ENCODE measurements at regions of chr4 and their contacts with region 1.

Region 1: GRCh38 chr4:164012396-164013027 is 518.0 kb downstream of the TMA16 start:
- DNase-seq: peak; percentile 23 to 56
- H3K4me3 ChIP-seq: no peak overlapping the region
- H3K27ac ChIP-seq: no peak overlapping the region
- H3K4me1 ChIP-seq: no peaks in the 10 kb centered on the region
- H3K27me3 ChIP-seq: no peaks in the 10 kb centered on the region
- CTCF ChIP-seq: peak; percentile 69 to 92 (median 87)
- EP300 ChIP-seq: peak in 1 of 2 experiments; percentile 44; a peak in 1 of 3 replicates
- POLR2A ChIP-seq: no peak
- RAD21 ChIP-seq: peak; percentile 98 to 99

Region 2: DNA sequence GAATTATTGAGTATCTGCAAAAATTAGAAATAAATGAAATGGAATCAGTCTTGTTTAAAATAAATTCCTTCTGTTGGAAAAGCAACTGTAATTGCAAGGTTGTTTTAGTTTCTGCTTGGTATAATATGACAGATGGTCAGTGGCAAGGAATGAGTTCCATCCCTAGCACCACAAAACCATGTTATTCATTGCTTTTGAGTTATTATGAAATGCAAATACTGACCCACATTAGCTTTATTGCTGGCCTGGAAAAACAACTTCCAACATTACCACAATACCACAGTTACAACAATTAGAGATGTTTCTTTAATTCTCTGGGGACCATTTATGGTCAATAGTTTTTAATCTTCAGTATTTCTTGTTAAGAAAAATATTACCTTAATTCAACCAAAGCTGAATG is 323.7 kb before region 1 on chr4:
- CTCF ChIA-PET with region 1: interaction called, 14 read pairs
- POLR2A ChIA-PET with region 1: no interaction called
- DNase-seq: no peak
- H3K4me3 ChIP-seq: no peak overlapping the region
- H3K27ac ChIP-seq: no peak overlapping the region
- H3K4me1 ChIP-seq: no peaks in the 10 kb centered on the region
- H3K27me3 ChIP-seq: no peaks in the 10 kb centered on the region
- CTCF ChIP-seq: no peak
- EP300 ChIP-seq: no peak
- POLR2A ChIP-seq: no peak
- RAD21 ChIP-seq: no peak

Region 3: GRCh38 chr4:163816494-163816893 is 196.0 kb before region 1 on chr4:
- CTCF ChIA-PET with region 1: interaction called, 14 read pairs
- POLR2A ChIA-PET with region 1: no interaction called
- DNase-seq: no peak
- H3K4me3 ChIP-seq: no peak overlapping the region
- H3K27ac ChIP-seq: no peak overlapping the region
- H3K4me1 ChIP-seq: no peaks in the 10 kb centered on the region
- H3K27me3 ChIP-seq: no peaks in the 10 kb centered on the region
- CTCF ChIP-seq: peak in 2 of 3 experiments; percentile 32 to 43; a peak in 2 of 4 replicates
- EP300 ChIP-seq: no peak
- POLR2A ChIP-seq: no peak
- RAD21 ChIP-seq: peak; percentile 71 to 78

Region 4: DNA sequence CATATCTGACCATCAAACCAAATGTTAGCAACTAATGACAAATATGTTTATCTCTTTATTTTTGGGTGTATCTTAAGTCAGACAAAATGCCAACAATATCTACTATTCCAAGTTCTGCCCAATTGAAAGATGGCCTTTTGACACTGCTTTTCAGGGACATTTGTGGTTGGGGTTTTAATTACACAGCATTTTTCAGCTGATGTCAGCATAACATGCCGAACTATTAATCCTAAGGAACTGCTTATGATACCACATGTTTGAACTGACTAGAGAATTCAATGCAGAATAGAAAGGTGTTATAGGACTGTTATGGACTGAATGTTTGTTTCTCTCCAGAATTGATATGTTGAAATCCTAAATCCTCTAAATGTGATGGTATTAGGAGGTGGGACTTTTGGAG is 72.9 kb before region 1 on chr4:
- CTCF ChIA-PET with region 1: no interaction called
- POLR2A ChIA-PET with region 1: no interaction called
- DNase-seq: no peak
- H3K4me3 ChIP-seq: no peak overlapping the region
- H3K27ac ChIP-seq: no peak overlapping the region
- H3K4me1 ChIP-seq: no peaks in the 10 kb centered on the region
- H3K27me3 ChIP-seq: no peaks in the 10 kb centered on the region
- CTCF ChIP-seq: no peak
- EP300 ChIP-seq: no peak
- POLR2A ChIP-seq: no peak
- RAD21 ChIP-seq: no peak

Region 5: DNA sequence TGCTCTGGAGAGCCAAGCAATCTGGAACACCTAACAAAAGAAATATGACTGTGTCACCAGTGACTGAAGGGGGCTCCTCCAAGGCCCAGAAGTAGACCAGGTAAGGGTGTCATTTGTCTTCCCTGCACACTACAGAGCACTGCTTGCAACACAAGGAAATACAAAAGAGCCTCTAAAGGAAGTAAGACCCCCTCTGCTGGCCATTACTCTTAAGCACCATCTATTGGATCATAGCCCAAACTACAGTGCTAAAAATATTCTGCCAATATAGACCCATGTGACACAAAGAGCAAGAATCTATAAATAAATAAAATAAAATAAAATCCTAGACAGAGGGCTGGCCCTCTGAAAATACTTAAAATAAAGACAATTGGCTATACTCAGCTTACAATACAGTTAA is 10.7 kb after region 1 on chr4:
- CTCF ChIA-PET with region 1: interaction called, 28 read pairs
- POLR2A ChIA-PET with region 1: no interaction called
- DNase-seq: peak in 1 of 2 experiments; percentile 44
- H3K4me3 ChIP-seq: no peak overlapping the region
- H3K27ac ChIP-seq: no peak overlapping the region
- H3K4me1 ChIP-seq: peaks cover 0 to 2% (median under 1%) of the 10 kb centered on the region in 4 experiments; a peak in 2 of 7 replicates
- H3K27me3 ChIP-seq: no peaks in the 10 kb centered on the region
- CTCF ChIP-seq: peak in 2 of 3 experiments; percentile 43 to 60; a peak in 3 of 4 replicates
- EP300 ChIP-seq: no peak
- POLR2A ChIP-seq: no peak
- RAD21 ChIP-seq: peak; percentile 36 to 47; a peak in 3 of 4 replicates

Measured in H1 (cell line).